Activated B cell treated with CpG ODN at 0.5 μM for 24 hours (primary cell): ENCODE measurements at regions of chr2 and their contacts with region 1.

Region 1: GRCh38 chr2:216687646-216688045 is 7.7 kb downstream of the IGFBP5 start:
- DNase-seq: no peak
- ATAC-seq: no peak
- H3K4me3 Mint-ChIP-seq: no peak overlapping the region
- H3K27ac Mint-ChIP-seq: no peak overlapping the region
- H3K4me1 Mint-ChIP-seq: peaks cover 12% of the 10 kb centered on the region
- H3K27me3 Mint-ChIP-seq: peaks cover 70% of the 10 kb centered on the region
- CTCF ChIP-seq: no peak

Region 2: DNA sequence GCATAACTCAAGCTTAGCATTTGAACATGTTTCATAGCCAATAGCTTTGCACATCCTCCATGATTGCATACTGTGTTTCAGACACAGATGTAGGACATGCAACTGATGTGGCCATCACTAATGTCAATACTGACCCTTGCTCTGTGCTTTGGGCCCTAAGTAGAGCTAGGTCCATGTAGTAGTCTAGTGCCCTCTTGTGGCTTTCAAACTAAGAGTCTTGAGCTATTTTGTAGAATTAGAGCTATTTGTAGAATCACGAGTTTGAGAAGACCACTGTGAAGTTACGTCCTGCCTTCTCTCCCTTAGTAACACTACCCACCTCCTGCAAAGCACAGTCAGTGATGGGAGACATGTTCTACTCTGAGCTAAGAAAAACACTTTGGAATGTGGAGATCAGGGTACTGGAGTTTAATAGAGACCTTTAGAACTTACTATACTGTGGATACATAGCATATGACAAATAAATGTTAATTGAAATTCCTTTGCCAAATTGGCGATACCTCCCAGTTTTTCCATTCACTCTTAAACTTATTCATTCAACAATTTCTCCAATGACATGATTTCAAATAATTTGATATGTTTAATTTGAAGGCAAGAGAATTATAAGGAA is 478.7 kb after region 1 on chr2:
- CTCF ChIA-PET with region 1: no interaction called
- POLR2A ChIA-PET with region 1: no interaction called
- intact Hi-C with region 1: loop called (anchors 10 kb)
- DNase-seq: no peak
- ATAC-seq: no peak
- H3K4me3 Mint-ChIP-seq: no peak overlapping the region
- H3K27ac Mint-ChIP-seq: no peak overlapping the region
- H3K4me1 Mint-ChIP-seq: peaks cover 2% of the 10 kb centered on the region
- H3K27me3 Mint-ChIP-seq: peaks cover 37% of the 10 kb centered on the region
- CTCF ChIP-seq: no peak